ENCODE measurements at regions of chr1 and their contacts with region 1.

Region 1: GRCh38 chr1:84433258-84434080 is 35.2 kb downstream of the DNASE2B start:
- DNase-seq: peak; percentile 21 to 92
- ATAC-seq: peak; percentile 71 to 85 (median 84)
- H3K4me3 ChIP-seq: peak overlapping the region; percentile 2
- H3K4me3 Mint-ChIP-seq: peak overlapping the region; percentile 72
- H3K27ac ChIP-seq: peak overlapping the region; percentile 69
- H3K27ac Mint-ChIP-seq: no peak overlapping the region
- H3K4me1 ChIP-seq: peaks cover 27% of the 10 kb centered on the region
- H3K4me1 Mint-ChIP-seq: peaks cover 4 to 8% of the 10 kb centered on the region in 2 donors
- H3K27me3 ChIP-seq: no peaks in the 10 kb centered on the region
- H3K27me3 Mint-ChIP-seq: no peaks in the 10 kb centered on the region
- CTCF ChIP-seq: peak; percentile 70

Region 2: GRCh38 chr1:83931658-83932253 is 501.7 kb before region 1 on chr1:
- intact Hi-C with region 1: loop called (anchors 10 kb)
- DNase-seq: peak in 1 of 2 donors; percentile 69
- ATAC-seq: peak; percentile 63 to 85 (median 83)
- H3K4me3 ChIP-seq: no peak overlapping the region
- H3K4me3 Mint-ChIP-seq: no peak overlapping the region
- H3K27ac ChIP-seq: no peak overlapping the region
- H3K27ac Mint-ChIP-seq: no peak overlapping the region
- H3K4me1 ChIP-seq: no peaks in the 10 kb centered on the region
- H3K4me1 Mint-ChIP-seq: no peaks in the 10 kb centered on the region
- H3K27me3 ChIP-seq: no peaks in the 10 kb centered on the region
- H3K27me3 Mint-ChIP-seq: peaks cover 2 to 13% of the 10 kb centered on the region in 2 donors
- CTCF ChIP-seq: peak; percentile 80

Region 3: DNA sequence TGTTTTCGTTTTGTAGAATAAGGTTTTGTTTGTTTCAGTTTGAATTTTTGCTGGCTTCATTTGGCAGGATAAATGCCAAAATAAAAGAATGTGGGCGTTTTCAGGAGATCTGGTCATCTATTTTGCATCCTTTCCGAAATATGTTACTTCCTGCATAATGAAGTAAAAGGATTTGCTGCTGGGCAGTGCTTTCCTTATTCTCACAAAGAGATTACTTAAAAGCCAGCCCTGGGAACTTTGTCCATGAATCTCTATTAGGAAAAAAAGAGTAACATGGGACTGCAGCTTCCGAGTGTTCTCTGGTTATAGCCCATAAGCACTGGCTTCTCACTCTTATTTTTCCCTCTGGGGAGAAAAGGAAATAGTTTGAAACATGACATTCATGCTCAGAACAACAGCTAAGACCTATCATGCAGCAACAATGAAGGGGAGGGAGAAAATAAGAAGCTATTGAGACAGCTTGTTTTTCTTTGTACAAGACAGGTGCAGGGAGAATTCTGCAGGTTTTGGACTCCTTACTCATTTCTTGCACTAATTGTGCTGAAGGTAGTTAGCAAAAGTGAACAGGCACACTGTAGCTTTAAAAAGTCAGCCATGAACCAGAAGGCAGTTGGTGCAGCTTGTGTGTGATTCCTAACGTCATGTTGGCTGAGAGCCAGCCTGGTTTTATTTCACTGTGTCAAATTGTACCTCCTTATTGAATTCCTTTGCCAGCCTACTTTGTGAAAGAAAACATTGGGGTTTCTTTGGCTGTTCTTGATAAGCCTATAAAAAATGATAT is 132.3 kb before region 1 on chr1 and contains the start of gene SAMD13:
- intact Hi-C with region 1: loop called (anchors 10 kb)
- DNase-seq: peak in 1 of 2 donors; percentile 82
- ATAC-seq: no peak
- H3K4me3 ChIP-seq: peak within 1 kb of the TSS; percentile 10
- H3K4me3 Mint-ChIP-seq: peak within 1 kb of the TSS; percentile 71
- H3K27ac ChIP-seq: no peak within 1 kb of the TSS
- H3K27ac Mint-ChIP-seq: peak within 1 kb of the TSS; percentile 10 to 80
- H3K4me1 ChIP-seq: peaks cover 7% of the 10 kb centered on the region
- H3K4me1 Mint-ChIP-seq: peaks cover 28 to 45% of the 10 kb centered on the region in 2 donors
- H3K27me3 ChIP-seq: peaks cover 2% of the 10 kb centered on the region
- H3K27me3 Mint-ChIP-seq: peaks cover 2 to 8% of the 10 kb centered on the region in 2 donors
- CTCF ChIP-seq: no peak
- total RNA-seq, gene SAMD13: 0.40 TPM in 1 of 3 donors, not detected in the others

Region 4: GRCh38 chr1:84370831-84371394 is 62.6 kb before region 1 on chr1:
- intact Hi-C with region 1: loop called (anchors 5 kb)
- DNase-seq: no peak
- ATAC-seq: peak; percentile 75 to 81 (median 80)
- H3K4me3 ChIP-seq: no peak overlapping the region
- H3K4me3 Mint-ChIP-seq: no peak overlapping the region
- H3K27ac ChIP-seq: no peak overlapping the region
- H3K27ac Mint-ChIP-seq: peak overlapping the region; percentile 73 to 78
- H3K4me1 ChIP-seq: peaks cover 7% of the 10 kb centered on the region
- H3K4me1 Mint-ChIP-seq: peaks cover 44 to 67% of the 10 kb centered on the region in 2 donors
- H3K27me3 ChIP-seq: no peaks in the 10 kb centered on the region
- H3K27me3 Mint-ChIP-seq: no peaks in the 10 kb centered on the region
- CTCF ChIP-seq: no peak

Region 5: DNA sequence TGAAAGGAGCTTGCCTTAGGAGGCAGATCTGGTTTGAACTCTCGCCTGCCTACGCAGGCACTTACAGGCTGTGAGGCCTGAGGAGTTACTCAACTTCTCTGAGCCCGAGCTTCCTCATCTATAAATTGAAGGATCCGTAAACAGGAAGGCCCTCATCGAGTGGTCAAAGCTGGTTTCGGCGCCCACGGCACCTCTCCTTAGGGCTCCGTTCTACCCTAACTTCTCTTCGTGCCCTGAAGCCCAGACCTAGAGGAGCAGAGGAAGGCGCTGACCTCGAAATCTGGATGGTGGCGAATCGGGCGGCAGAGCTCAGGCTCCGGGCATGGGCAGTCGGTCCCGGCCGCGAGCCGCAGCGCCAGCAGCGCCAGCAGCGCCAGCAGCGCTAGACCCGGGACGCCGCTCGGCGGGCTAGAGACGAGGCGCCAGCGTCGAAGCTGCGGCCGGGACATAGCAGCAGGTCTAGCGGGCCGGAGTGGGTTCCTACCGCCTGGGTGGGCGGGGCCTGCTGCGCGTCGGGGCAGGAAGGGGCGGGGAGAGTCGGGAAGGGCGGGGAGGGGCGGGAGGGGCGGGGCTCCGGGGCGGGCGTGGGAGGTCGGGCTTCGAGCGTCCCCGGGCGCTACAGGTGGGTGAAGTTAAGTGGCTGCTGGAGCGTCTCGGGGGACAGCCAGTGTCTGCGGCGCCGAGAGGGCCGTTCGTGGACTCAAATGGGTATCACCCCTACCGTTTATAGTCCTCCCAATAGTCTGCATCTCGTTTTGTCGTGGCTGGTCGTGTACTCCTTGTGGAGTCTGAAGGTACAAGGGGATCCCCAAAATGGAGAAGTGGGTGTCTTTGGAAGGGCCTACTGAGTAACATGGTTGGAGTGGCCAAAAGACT is 140.7 kb after region 1 on chr1 and contains the start of gene CTBS:
- intact Hi-C with region 1: loop called (anchors 5 kb)
- DNase-seq: peak; percentile 80 to 94
- ATAC-seq: peak; percentile 95 to 99 (median 97)
- H3K4me3 ChIP-seq: peak within 1 kb of the TSS; percentile 72
- H3K4me3 Mint-ChIP-seq: peak within 1 kb of the TSS; percentile 93
- H3K27ac ChIP-seq: peak within 1 kb of the TSS; percentile 93
- H3K27ac Mint-ChIP-seq: peak within 1 kb of the TSS; percentile 98 to 99
- H3K4me1 ChIP-seq: peaks cover 16% of the 10 kb centered on the region
- H3K4me1 Mint-ChIP-seq: peaks cover 41 to 44% of the 10 kb centered on the region in 2 donors
- H3K27me3 ChIP-seq: no peaks in the 10 kb centered on the region
- H3K27me3 Mint-ChIP-seq: no peaks in the 10 kb centered on the region
- CTCF ChIP-seq: no peak
- total RNA-seq, gene CTBS: 14.4 to 19.9 (median 17.1) TPM

Region 6: GRCh38 chr1:84690397-84691121 is 257.1 kb after region 1 on chr1 and contains the start of gene SSX2IP:
- intact Hi-C with region 1: loop called (anchors 5 kb)
- DNase-seq: peak; percentile 98 to 99
- ATAC-seq: peak; percentile 75 to 94 (median 87)
- H3K4me3 ChIP-seq: peak within 1 kb of the TSS; percentile 60
- H3K4me3 Mint-ChIP-seq: peak within 1 kb of the TSS; percentile 97
- H3K27ac ChIP-seq: peak within 1 kb of the TSS; percentile 85
- H3K27ac Mint-ChIP-seq: peak within 1 kb of the TSS; percentile 99
- H3K4me1 ChIP-seq: peaks cover 23% of the 10 kb centered on the region
- H3K4me1 Mint-ChIP-seq: peaks cover 62 to 67% of the 10 kb centered on the region in 2 donors
- H3K27me3 ChIP-seq: no peaks in the 10 kb centered on the region
- H3K27me3 Mint-ChIP-seq: no peaks in the 10 kb centered on the region
- CTCF ChIP-seq: no peak
- total RNA-seq, gene SSX2IP: 24.2 to 35.8 (median 27.2) TPM